Tibial artery (tissue), 4 donors: ENCODE measurements at regions of chr2 and their contacts with region 1.

Region 1: DNA sequence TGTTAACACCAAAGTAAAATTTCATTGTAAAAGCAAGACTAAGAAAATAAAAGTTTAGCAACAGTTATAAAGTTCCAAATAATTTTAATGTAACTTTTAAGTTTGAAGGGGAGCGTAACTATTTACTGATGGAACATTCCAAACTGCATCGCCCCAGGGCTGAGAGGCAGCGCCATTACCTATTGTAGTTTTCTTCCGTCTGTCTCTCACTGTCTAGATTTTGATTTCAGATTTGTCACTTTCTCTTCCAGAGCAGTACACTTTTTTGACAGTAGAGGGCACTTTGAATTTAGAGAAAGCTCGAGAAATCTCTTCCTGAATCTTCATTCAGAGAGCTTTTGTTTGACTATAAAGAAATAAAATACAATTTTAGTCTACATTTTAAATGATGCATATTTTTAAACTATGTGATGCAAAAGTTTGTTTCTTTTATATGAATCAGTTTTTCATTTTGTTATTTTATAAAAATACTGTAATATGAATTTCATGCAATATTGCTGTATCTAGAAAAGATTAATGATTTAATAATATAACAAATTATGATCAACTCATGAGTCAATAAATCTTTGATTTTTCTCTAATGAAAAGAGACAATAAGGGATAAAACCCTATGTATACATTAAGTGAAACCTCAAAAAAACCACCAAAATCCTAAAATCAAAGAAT is 389.8 kb downstream of the FIGN start:
- DNase-seq: no peak
- H3K4me3 ChIP-seq: no peak overlapping the region
- H3K27ac ChIP-seq: no peak overlapping the region
- H3K4me1 ChIP-seq: peaks cover 0 to 29% (median 9%) of the 10 kb centered on the region in 4 donors
- H3K27me3 ChIP-seq: no peaks in the 10 kb centered on the region
- CTCF ChIP-seq: peak; percentile 76 to 77

Region 2: GRCh38 chr2:164145093-164145987 is 799.3 kb after region 1 on chr2:
- intact Hi-C with region 1: loop called (anchors 10 kb)
- DNase-seq: no peak
- H3K4me3 ChIP-seq: no peak overlapping the region
- H3K27ac ChIP-seq: no peak overlapping the region
- H3K4me1 ChIP-seq: no peaks in the 10 kb centered on the region
- H3K27me3 ChIP-seq: no peaks in the 10 kb centered on the region
- CTCF ChIP-seq: no peak

Region 3: DNA sequence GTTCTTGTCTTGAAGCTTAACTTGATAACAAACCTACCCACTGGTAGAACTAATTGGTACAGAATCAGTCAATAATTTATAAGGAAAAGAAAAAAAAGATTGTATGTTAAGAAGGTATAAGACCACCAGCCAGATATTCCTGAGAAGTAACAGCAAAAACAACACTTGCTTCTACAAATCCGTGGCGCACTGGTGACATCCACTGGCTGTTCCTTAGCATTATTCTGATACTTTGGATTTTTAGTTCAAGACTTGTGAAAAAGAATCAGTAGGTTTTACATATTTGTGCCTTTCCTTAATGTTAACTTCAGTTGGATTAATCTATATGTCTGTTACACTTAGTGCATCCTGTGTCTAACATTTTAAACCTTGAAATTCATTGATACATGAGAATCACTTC is 1133.4 kb after region 1 on chr2:
- intact Hi-C with region 1: loop called (anchors 5 kb)
- DNase-seq: no peak
- H3K4me3 ChIP-seq: no peak overlapping the region
- H3K27ac ChIP-seq: no peak overlapping the region
- H3K4me1 ChIP-seq: no peaks in the 10 kb centered on the region
- H3K27me3 ChIP-seq: no peaks in the 10 kb centered on the region
- CTCF ChIP-seq: peak; percentile 40 to 41